SK-N-SH (cell line): ENCODE measurements at regions of chr4 and their contacts with region 1.

Region 1: GRCh38 chr4:53929955-53930798 is 134.2 kb downstream of the CHIC2 start:
- DNase-seq: peak; percentile 61
- H3K4me3 ChIP-seq: peak overlapping the region in 1 of 2 experiments; percentile 7; a peak in 1 of 4 replicates
- H3K27ac ChIP-seq: peak overlapping the region in 1 of 2 experiments; percentile 84; a peak in 2 of 4 replicates
- H3K4me1 ChIP-seq: peaks cover 3 to 30% of the 10 kb centered on the region in 2 experiments
- H3K27me3 ChIP-seq: no peaks in the 10 kb centered on the region
- CTCF ChIP-seq: peak; percentile 85
- EP300 ChIP-seq: no peak; a peak in 1 of 4 replicates
- RAD21 ChIP-seq: peak; percentile 92

Region 2: DNA sequence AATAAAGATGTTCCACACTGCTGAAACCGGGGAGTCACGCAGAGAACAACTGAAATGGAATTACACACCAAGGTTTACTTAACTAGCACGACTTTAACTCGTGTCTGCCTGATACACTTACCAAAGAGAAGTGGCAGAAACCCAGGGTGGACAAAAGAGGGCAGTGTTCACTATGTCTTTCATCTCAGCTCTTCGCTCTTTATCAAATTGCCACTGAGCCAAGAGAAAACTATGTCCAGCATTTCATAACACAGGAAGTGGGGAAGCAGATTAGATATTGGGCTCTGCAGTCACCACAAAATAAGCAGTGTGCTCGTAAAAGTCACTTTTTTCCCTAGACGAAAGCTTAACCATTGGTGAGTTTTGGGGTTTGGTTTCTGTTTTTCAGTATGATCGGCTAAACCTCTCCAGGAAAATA is 21.5 kb before region 1 on chr4:
- CTCF ChIA-PET with region 1: interaction called, 50 read pairs
- POLR2A ChIA-PET with region 1: no interaction called
- DNase-seq: peak; percentile 58
- H3K4me3 ChIP-seq: peak overlapping the region; percentile 14 to 21; a peak in 3 of 4 replicates
- H3K27ac ChIP-seq: peak overlapping the region; percentile 59 to 86
- H3K4me1 ChIP-seq: peaks cover 7 to 22% of the 10 kb centered on the region in 2 experiments; a peak in 3 of 4 replicates
- H3K27me3 ChIP-seq: no peaks in the 10 kb centered on the region
- CTCF ChIP-seq: peak; percentile 85
- EP300 ChIP-seq: peak; percentile 19 to 61; a peak in 3 of 4 replicates
- RAD21 ChIP-seq: peak; percentile 97

Region 3: DNA sequence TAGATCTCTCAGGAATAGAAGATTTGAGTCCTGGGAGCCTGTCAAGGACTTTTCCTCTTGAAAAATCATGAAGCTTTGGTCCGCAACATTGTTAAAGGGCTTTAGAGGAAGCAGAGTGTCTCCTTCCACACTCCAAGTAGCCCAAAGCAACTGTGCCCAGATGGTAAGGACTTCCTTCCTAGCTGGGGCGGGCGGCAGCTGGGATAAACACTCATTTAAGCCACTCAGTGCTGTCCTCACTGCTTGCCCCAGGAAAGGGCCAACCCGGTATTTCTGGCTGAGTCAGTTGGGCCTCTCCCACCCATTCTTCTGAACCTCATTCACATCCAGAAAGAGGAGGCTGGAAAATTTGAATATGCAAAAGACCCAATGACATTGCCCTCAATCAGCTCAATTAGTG is 10.1 kb before region 1 on chr4:
- CTCF ChIA-PET with region 1: interaction called, 13 read pairs
- POLR2A ChIA-PET with region 1: no interaction called
- DNase-seq: no peak
- H3K4me3 ChIP-seq: no peak overlapping the region
- H3K27ac ChIP-seq: no peak overlapping the region
- H3K4me1 ChIP-seq: peaks cover 1 to 11% of the 10 kb centered on the region in 2 experiments; a peak in 3 of 4 replicates
- H3K27me3 ChIP-seq: no peaks in the 10 kb centered on the region
- CTCF ChIP-seq: no peak
- EP300 ChIP-seq: no peak
- RAD21 ChIP-seq: no peak

Region 4: DNA sequence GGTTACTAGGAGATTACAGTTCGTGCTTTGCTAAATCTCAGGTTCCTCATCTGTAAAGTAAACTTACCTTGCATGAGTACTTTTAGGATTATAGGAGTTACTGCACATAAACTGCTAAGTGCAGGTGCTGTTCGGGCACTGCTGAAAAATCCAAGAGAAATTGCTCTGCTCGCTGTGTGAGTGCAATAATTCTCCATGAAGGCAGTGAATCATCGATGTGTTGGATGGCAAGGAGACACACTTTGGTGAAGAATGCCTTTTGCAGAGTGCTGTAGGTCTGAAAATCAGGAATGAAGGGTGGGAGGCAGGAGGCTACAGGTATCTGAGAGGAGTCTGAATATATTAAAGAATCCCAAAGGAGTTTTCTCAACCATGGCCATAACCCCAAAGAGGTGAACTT is 21.2 kb after region 1 on chr4:
- CTCF ChIA-PET with region 1: interaction called, 10 read pairs
- POLR2A ChIA-PET with region 1: no interaction called
- DNase-seq: no peak
- H3K4me3 ChIP-seq: no peak overlapping the region
- H3K27ac ChIP-seq: no peak overlapping the region
- H3K4me1 ChIP-seq: peaks cover 0 to 9% of the 10 kb centered on the region in 2 experiments; a peak in 1 of 4 replicates
- H3K27me3 ChIP-seq: no peaks in the 10 kb centered on the region
- CTCF ChIP-seq: no peak
- EP300 ChIP-seq: no peak
- RAD21 ChIP-seq: no peak

Region 5: DNA sequence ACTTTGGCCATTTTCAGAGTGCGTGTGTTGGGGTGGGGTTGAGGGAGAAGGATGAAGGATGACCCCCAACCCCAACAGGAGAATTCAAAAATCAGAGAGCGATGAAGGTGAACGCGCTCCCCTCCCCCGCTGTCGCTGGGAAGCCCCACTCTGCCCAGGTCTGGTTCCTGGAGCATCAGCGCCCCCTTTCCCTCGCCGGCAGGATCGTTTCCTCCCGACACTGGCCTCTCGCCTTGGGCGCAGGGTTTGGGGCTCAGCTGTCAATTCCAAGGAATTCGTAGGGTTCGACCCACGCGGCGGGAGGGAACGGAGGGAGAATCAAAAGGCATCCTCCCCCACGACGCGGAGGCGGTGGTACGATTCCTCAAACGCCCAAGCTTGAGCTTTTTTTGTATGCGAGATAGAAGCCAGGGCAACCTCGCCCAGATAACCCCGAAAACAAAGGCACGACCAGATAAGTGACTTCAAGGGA is 297.9 kb after region 1 on chr4:
- CTCF ChIA-PET with region 1: interaction called, 77 read pairs
- POLR2A ChIA-PET with region 1: interaction called, 3 read pairs
- DNase-seq: peak; percentile 87
- H3K4me3 ChIP-seq: peak overlapping the region; percentile 64 to 85
- H3K27ac ChIP-seq: peak overlapping the region; percentile 79 to 90; a peak in 3 of 4 replicates
- H3K4me1 ChIP-seq: peaks cover 0 to 20% of the 10 kb centered on the region in 2 experiments; a peak in 2 of 4 replicates
- H3K27me3 ChIP-seq: no peaks in the 10 kb centered on the region
- CTCF ChIP-seq: peak; percentile 88
- EP300 ChIP-seq: no peak
- RAD21 ChIP-seq: peak; percentile 91